ENCODE measurements at regions of chr9 and their contacts with region 1.

Region 1: DNA sequence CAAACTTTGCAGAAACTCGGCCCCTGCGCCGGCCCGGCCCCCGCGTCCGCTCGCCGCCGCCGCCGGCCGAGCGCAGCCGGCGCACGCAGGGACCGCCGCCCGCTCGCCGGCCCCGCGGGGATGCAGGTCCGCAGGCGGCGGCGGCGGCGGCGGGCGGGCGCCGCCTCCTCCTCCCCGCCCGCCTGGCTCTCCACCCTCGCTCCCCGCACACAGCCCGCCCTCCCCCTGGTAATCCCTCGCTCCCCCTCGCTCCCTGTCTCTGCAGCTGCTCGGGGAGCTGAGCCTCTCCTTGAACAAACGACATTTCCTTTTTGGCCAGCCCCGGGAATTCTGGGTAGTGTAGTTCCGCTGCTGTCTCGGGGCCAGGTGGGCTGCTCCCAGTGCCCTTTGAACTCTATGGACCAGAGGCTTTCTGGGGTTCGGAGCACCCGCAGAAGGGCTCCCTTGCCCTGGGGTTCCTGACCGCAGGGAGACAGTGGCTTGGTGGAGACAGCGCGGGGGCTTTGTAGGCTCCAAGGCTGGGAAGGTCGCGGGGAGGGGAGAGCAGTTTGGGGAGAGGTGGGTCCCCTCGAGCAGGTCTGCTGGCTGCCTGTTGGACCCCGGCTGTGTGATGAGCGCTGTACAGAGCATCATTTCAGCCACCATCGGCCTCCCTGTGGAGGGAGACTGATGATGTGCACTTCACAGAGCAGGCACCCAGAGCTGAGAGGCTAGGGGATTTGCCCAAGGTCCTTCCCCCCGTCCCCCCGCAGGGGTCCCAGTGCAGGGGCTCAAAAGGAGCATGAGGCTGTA is 1.8 kb upstream of the FAM78A start:
- DNase-seq: peak; percentile 43 to 89 (median 72)
- ATAC-seq: peak; percentile 51
- H3K4me3 ChIP-seq: peak overlapping the region; percentile 45 to 49
- H3K4me3 Mint-ChIP-seq: peak overlapping the region; percentile 90
- H3K27ac ChIP-seq: peak overlapping the region; percentile 48 to 84
- H3K27ac Mint-ChIP-seq: peak overlapping the region; percentile 90
- H3K4me1 ChIP-seq: peaks cover 26% of the 10 kb centered on the region
- H3K4me1 Mint-ChIP-seq: peaks cover 30% of the 10 kb centered on the region
- H3K27me3 ChIP-seq: peaks cover 0 to 3% of the 10 kb centered on the region in 2 experiments
- H3K27me3 Mint-ChIP-seq: no peaks in the 10 kb centered on the region
- CTCF ChIP-seq: no peak

Region 2: DNA sequence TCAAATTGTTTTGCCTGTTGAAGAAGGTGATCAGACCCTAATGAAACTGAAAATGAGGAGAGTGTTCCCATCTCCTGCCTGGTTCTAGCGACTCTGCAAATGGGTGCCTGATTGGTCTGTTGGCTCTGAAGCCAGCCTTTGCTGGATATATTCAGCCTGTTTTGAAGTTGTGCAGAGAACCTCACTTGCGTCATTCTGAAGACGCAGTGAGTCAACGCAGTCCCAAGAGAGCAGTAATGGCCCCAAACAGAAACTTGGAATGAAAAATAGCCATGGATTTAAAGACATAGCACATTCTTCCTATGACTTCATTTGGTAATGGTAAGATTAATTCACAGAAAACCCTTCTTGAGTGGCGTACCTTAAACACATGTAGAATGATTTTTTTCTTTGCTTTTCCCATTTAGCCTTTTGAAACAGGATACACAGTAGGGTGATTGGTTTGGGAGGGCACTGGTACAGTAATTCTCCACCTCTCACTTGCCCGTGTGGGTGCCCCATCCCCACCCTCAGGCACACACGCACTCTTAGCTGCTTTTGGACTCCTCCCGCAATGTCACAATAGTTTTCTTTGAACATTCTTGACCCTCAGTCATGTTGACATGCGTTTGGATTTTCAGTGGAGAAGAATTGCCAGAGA is 497.1 kb before region 1 on chr9:
- CTCF ChIA-PET with region 1: no interaction called
- POLR2A ChIA-PET with region 1: no interaction called
- intact Hi-C with region 1: no loop called
- DNase-seq: no peak
- ATAC-seq: no peak
- H3K4me3 ChIP-seq: no peak overlapping the region
- H3K4me3 Mint-ChIP-seq: no peak overlapping the region
- H3K27ac ChIP-seq: no peak overlapping the region
- H3K27ac Mint-ChIP-seq: no peak overlapping the region
- H3K4me1 ChIP-seq: no peaks in the 10 kb centered on the region
- H3K4me1 Mint-ChIP-seq: peaks cover 19% of the 10 kb centered on the region
- H3K27me3 ChIP-seq: no peaks in the 10 kb centered on the region
- H3K27me3 Mint-ChIP-seq: no peaks in the 10 kb centered on the region
- CTCF ChIP-seq: no peak

Region 3: DNA sequence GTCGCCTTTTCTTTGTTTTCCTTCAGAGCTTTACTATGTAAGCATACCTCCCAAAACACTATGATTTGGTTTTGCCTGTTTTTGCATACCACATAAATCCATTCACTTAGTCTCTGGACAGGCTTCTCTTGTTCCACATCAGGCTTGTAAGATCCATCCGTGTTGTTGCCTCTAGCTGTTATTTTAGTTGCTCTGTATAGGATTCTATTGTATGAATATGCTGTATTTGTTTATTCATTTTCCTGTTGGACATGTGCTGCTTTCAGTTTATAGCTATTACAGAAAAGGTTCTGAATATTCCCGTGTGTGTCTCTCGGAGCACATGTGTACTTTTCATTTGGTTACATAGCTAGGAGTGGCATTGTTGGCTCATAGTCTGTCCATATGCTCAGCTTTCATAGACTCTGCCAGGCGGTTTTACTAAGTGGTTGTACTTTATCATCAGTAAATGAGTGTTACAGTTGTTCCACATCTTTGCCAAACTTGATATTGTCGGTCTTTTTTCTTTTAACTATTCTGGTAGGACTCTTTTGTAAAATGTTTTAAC is 110.9 kb before region 1 on chr9:
- CTCF ChIA-PET with region 1: no interaction called
- POLR2A ChIA-PET with region 1: no interaction called
- intact Hi-C with region 1: no loop called
- DNase-seq: no peak
- ATAC-seq: no peak
- H3K4me3 ChIP-seq: no peak overlapping the region
- H3K4me3 Mint-ChIP-seq: no peak overlapping the region
- H3K27ac ChIP-seq: no peak overlapping the region
- H3K27ac Mint-ChIP-seq: peak overlapping the region; percentile 21
- H3K4me1 ChIP-seq: no peaks in the 10 kb centered on the region
- H3K4me1 Mint-ChIP-seq: peaks cover 2% of the 10 kb centered on the region
- H3K27me3 ChIP-seq: no peaks in the 10 kb centered on the region
- H3K27me3 Mint-ChIP-seq: no peaks in the 10 kb centered on the region
- CTCF ChIP-seq: no peak

Region 4: GRCh38 chr9:131178382-131178781 is 99.7 kb before region 1 on chr9:
- CTCF ChIA-PET with region 1: interaction called, 5 read pairs
- POLR2A ChIA-PET with region 1: interaction called, 6 read pairs
- intact Hi-C with region 1: loop called in 1 of 2 experiments (anchors 1 kb)
- DNase-seq: peak; percentile 65 to 86 (median 77)
- ATAC-seq: peak; percentile 100
- H3K4me3 ChIP-seq: no peak overlapping the region
- H3K4me3 Mint-ChIP-seq: no peak overlapping the region
- H3K27ac ChIP-seq: no peak overlapping the region
- H3K27ac Mint-ChIP-seq: no peak overlapping the region
- H3K4me1 ChIP-seq: no peaks in the 10 kb centered on the region
- H3K4me1 Mint-ChIP-seq: peaks cover 12% of the 10 kb centered on the region
- H3K27me3 ChIP-seq: no peaks in the 10 kb centered on the region
- H3K27me3 Mint-ChIP-seq: no peaks in the 10 kb centered on the region
- CTCF ChIP-seq: peak; percentile 99

Region 5: GRCh38 chr9:131214286-131214856 is 63.7 kb before region 1 on chr9:
- CTCF ChIA-PET with region 1: no interaction called
- POLR2A ChIA-PET with region 1: no interaction called
- intact Hi-C with region 1: loop called in 1 of 2 experiments (anchors 10 kb)
- DNase-seq: no peak
- ATAC-seq: no peak
- H3K4me3 ChIP-seq: no peak overlapping the region
- H3K4me3 Mint-ChIP-seq: no peak overlapping the region
- H3K27ac ChIP-seq: no peak overlapping the region
- H3K27ac Mint-ChIP-seq: no peak overlapping the region
- H3K4me1 ChIP-seq: no peaks in the 10 kb centered on the region
- H3K4me1 Mint-ChIP-seq: peaks cover 4% of the 10 kb centered on the region
- H3K27me3 ChIP-seq: no peaks in the 10 kb centered on the region
- H3K27me3 Mint-ChIP-seq: no peaks in the 10 kb centered on the region
- CTCF ChIP-seq: no peak

Region 6: DNA sequence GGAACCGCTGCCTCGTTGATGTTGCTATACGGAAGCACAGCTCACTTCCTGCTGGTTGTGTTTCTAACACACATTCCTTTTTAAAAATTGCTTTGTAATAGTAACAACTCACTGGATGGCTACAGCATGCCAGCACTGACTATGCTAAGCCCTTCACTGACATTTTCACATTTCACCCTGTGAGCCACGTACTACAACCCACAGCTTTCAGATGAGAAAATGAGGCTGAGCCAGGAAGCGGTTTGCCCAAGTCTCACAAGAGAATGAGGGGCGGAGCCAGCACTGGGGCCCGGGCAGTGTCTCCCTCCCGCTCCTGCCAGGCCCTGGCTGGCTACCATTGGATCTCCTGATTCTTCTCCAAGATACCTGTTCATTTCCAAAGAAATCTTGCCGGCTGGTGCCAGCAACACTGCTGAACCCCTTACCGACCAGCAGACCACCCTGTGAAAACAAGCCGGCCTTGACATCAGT is 40.1 kb before region 1 on chr9:
- CTCF ChIA-PET with region 1: no interaction called
- POLR2A ChIA-PET with region 1: interaction called, 34 read pairs
- intact Hi-C with region 1: loop called (anchors 1 to 2 kb)
- DNase-seq: peak; percentile 71 to 94 (median 88)
- ATAC-seq: peak; percentile 92
- H3K4me3 ChIP-seq: peak overlapping the region; percentile 15 to 50
- H3K4me3 Mint-ChIP-seq: peak overlapping the region; percentile 83
- H3K27ac ChIP-seq: peak overlapping the region; percentile 54 to 73
- H3K27ac Mint-ChIP-seq: peak overlapping the region; percentile 98
- H3K4me1 ChIP-seq: peaks cover 41% of the 10 kb centered on the region
- H3K4me1 Mint-ChIP-seq: peaks cover 42% of the 10 kb centered on the region
- H3K27me3 ChIP-seq: no peaks in the 10 kb centered on the region
- H3K27me3 Mint-ChIP-seq: no peaks in the 10 kb centered on the region
- CTCF ChIP-seq: no peak

Region 7: DNA sequence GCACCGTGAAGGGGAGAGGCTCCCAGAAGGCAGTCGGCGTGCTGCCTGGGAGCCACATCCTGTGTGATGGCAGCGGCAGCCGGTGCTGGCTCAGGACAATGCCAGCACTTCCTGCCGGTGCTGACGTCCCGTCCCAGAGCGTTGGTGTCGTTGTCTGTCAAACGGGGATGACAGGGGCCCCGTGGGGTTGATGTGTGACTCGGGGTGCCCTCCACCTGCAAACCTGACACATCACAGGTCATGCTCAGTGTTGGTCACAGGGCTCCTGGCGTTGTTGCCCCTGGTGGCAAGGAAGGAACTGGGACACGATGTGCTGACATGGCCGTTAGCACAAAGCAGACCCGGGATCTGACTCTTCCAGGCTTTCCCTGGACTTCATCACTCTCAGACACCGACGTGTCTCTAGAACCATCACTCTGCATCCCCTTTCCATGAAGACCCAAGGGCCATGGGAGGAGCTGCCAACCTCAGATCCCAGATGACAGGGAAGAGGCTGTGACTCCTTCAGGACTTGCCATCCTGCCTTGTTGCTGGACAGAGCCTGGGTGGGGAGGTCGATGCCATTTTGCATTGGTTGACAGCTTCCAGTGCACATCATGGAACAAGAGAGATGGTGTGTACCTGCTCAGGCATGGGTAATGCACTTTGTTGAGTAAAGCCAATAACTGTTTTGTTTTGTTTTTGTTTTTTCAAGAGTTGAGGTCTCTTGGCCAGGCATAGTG is 32.9 kb after region 1 on chr9:
- CTCF ChIA-PET with region 1: interaction called, 3 read pairs
- POLR2A ChIA-PET with region 1: no interaction called
- intact Hi-C with region 1: loop called in 1 of 2 experiments (anchors 2 kb)
- DNase-seq: peak; percentile 39 to 91 (median 68)
- ATAC-seq: peak; percentile 97
- H3K4me3 ChIP-seq: peak overlapping the region; percentile 10 to 21
- H3K4me3 Mint-ChIP-seq: peak overlapping the region; percentile 54
- H3K27ac ChIP-seq: peak overlapping the region; percentile 3 to 31
- H3K27ac Mint-ChIP-seq: no peak overlapping the region
- H3K4me1 ChIP-seq: peaks cover 11% of the 10 kb centered on the region
- H3K4me1 Mint-ChIP-seq: peaks cover 12% of the 10 kb centered on the region
- H3K27me3 ChIP-seq: no peaks in the 10 kb centered on the region
- H3K27me3 Mint-ChIP-seq: no peaks in the 10 kb centered on the region
- CTCF ChIP-seq: no peak

Measured in CD8-positive, alpha-beta T cell (primary cell).